ENCODE measurements at regions of chr3 and their contacts with region 1.

Region 1: DNA sequence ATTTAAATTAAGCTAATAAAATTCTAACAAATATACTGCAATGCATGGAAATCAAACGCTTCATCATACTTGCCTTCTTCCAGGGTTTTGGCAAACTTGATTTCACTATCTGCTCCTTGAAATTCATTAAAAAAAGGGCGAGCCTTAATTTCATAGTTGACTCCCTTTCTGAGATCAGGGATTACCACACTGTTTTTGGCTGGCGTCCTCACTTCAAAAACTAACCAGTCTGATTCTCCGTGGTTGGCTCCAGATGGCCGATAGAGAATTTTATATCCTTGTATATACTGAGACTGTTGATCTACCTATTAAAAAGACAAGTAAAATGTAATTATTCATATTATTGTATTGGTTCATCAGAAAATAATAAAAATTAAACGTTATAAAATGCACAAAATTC is 1106.8 kb downstream of the ROBO1 start:
- DNase-seq: no peak
- H3K4me3 ChIP-seq: no peak overlapping the region
- H3K27ac ChIP-seq: no peak overlapping the region
- H3K4me1 ChIP-seq: no peaks in the 10 kb centered on the region
- H3K27me3 ChIP-seq: no peaks in the 10 kb centered on the region
- CTCF ChIP-seq: no peak

Region 2: GRCh38 chr3:78497767-78498166 is 163.2 kb before region 1 on chr3:
- intact Hi-C with region 1: no loop called
- DNase-seq: no peak
- H3K4me3 ChIP-seq: no peak overlapping the region
- H3K27ac ChIP-seq: no peak overlapping the region
- H3K4me1 ChIP-seq: no peaks in the 10 kb centered on the region
- H3K27me3 ChIP-seq: no peaks in the 10 kb centered on the region
- CTCF ChIP-seq: no peak

Region 3: DNA sequence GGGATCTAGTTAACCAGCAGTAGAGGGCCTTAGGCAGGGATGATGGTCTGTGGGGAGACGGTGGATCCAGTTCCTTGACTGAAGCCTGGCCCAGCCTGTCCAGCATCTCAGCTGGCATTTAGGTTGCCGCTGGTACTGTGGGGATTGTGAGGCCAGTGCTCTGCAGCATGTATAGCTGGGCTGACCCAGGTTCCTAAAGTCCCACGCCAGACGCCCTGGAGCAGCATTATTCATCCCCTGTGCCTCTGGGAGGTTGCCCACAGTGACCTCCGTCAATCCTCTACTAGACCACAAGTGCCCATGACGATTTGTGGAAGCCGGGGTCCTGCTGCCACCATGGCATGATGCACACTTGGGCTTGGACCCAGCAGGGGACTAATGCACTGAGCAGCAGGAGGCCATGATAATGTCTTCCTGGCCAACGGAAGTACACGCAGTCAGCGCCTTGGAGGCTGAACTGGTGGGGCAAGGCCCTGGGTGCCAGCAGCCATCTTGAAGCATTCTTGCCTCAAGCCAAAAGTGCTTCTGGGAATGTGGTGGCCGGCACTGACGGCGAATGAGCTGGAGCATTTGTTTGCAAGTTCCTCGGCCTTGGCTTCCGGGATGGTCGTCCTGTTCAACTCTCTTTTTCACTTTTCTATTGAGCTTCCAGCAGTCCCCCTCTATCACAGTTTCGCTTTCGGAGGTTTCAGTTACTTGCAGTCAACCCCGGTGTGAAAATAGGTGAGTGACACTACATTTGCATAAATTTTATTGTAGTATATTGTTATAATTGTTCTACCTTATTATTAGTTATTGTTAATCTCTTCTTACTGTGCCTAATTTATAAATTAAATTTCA is 157.4 kb after region 1 on chr3:
- intact Hi-C with region 1: no loop called
- DNase-seq: peak in 2 of 5 donors; percentile 27 to 51
- H3K4me3 ChIP-seq: no peak overlapping the region
- H3K27ac ChIP-seq: no peak overlapping the region
- H3K4me1 ChIP-seq: no peaks in the 10 kb centered on the region
- H3K27me3 ChIP-seq: no peaks in the 10 kb centered on the region
- CTCF ChIP-seq: no peak

Region 4: GRCh38 chr3:78867409-78868372 is 206.7 kb after region 1 on chr3:
- intact Hi-C with region 1: no loop called
- DNase-seq: peak in 2 of 5 donors; percentile 61 to 69
- H3K4me3 ChIP-seq: no peak overlapping the region
- H3K27ac ChIP-seq: no peak overlapping the region
- H3K4me1 ChIP-seq: no peaks in the 10 kb centered on the region
- H3K27me3 ChIP-seq: no peaks in the 10 kb centered on the region
- CTCF ChIP-seq: no peak

Region 5: DNA sequence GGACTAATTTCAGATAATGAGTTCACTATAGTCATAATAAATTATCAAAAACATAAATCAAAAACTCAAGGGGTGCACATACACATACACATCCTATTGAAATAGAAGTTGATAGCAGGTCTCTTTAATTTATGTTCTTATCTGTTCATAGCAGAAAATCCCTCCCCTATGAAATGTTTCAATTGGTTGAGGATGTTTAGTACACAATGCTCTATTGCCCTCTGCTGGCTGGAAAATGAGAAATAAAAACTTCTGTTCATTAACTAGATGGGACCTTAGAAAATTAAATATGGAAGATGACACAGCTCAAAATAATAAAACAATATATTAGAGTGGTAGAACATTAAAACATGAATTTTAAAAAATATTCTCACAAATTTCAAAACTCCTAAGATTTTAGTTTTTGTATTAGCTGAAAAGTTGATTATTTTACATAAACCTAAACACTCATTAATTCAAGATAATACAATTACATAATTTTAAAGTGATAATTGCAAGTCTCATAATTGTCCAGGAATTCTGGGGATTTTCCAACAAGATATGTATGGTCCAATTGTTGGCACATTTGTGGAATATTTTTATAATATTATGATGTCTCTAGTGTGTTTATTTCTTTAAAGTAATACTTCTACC is 371.8 kb after region 1 on chr3:
- intact Hi-C with region 1: loop called (anchors 5 kb)
- DNase-seq: peak in 2 of 5 donors; percentile 67 to 77
- H3K4me3 ChIP-seq: no peak overlapping the region
- H3K27ac ChIP-seq: no peak overlapping the region
- H3K4me1 ChIP-seq: no peaks in the 10 kb centered on the region
- H3K27me3 ChIP-seq: no peaks in the 10 kb centered on the region
- CTCF ChIP-seq: peak; percentile 49

Measured in kidney (tissue), 22 donors.